ENCODE measurements at regions of chr20 and their contacts with region 1.

Region 1: DNA sequence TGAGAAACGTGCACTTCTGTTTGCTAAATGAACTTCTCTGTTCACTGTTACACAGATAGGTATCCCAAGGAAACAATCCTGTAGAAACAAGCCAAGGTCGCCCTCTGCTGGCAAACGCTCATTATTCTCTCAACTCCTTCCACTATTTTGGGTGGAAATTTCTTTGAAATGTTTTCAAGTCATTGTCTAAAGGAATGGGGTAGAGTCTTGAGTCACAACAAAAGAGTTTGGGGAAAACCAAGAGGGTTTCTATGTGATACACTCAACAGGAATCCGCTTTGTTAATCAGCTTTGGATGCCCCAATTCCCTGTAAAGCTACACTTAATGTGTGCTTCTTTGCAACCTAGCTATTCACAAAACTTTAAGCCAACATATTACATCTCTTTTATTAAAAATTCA is 4.6 kb upstream of the RAE1 start:
- DNase-seq: peak; percentile 78
- ATAC-seq: peak; percentile 45 to 58

Region 2: DNA sequence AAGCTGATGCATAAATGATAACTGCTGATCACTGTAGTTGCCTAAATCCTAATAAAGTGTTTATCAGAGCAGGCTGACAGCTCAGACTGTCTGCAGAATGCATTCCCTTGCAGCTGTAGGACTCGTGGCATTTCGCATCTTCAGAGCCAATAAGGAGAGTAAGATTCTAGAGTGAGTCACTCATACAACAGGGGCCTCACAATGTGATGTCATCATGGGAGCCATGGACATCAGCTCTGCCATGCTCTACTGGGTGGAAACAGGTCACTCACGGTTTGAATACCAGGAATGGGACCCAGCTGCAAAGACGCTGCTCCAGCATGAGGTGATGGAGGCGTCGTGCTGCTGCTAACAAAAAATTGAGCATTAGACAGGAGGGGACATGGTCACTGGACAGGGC is 806.1 kb before region 1 on chr20:
- intact Hi-C with region 1: loop called in 1 of 2 experiments (anchors 5 kb)
- DNase-seq: no peak
- ATAC-seq: no peak